Activated CD4-positive, alpha-beta T cell treated with anti-CD3 and anti-CD28 coated beads, Interleukin-2, amount 10 ng/mL, durations not matched to agents 7 days and 5 days (primary cell): ENCODE measurements at regions of chr12 and their contacts with region 1.

Region 1: DNA sequence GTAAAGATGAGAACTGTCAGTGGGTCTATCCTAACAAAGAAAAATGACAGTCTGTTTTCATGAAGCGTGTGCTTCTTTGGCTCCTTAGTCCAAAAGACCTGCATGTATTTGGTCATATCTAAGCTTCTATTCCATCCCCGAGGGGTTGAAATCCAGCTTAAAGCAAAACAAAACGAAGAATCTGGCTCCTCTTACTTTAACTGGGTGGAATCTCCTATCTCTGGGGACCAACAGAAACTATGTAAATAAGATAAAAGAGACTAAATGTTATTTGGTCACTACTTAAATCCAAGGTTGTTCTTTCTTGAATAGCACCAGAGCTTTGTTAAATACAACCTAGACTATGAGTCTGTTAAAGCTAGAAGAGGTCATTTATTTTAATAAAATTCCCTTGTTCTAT is 9.4 kb downstream of the IGF1 start:
- DNase-seq: no peak
- H3K4me3 Mint-ChIP-seq: no peak overlapping the region
- H3K27ac Mint-ChIP-seq: no peak overlapping the region
- H3K4me1 Mint-ChIP-seq: peaks cover 17% of the 10 kb centered on the region
- H3K27me3 Mint-ChIP-seq: peaks cover 20% of the 10 kb centered on the region

Region 2: GRCh38 chr12:102454808-102455760 is 15.9 kb before region 1 on chr12:
- CTCF ChIA-PET with region 1: no interaction called
- POLR2A ChIA-PET with region 1: no interaction called
- DNase-seq: no peak
- H3K4me3 Mint-ChIP-seq: no peak overlapping the region
- H3K27ac Mint-ChIP-seq: no peak overlapping the region
- H3K4me1 Mint-ChIP-seq: no peaks in the 10 kb centered on the region
- H3K27me3 Mint-ChIP-seq: peaks cover 3% of the 10 kb centered on the region

Region 3: GRCh38 chr12:102484428-102484958 is 13.5 kb after region 1 on chr12:
- CTCF ChIA-PET with region 1: interaction called, 16 read pairs
- POLR2A ChIA-PET with region 1: no interaction called
- DNase-seq: peak; percentile 61
- H3K4me3 Mint-ChIP-seq: peak overlapping the region; percentile 31
- H3K27ac Mint-ChIP-seq: peak overlapping the region; percentile 84
- H3K4me1 Mint-ChIP-seq: peaks cover 28% of the 10 kb centered on the region
- H3K27me3 Mint-ChIP-seq: no peaks in the 10 kb centered on the region